Naive thymus-derived CD4-positive, alpha-beta T cell (primary cell): ENCODE measurements at regions of chr1 and their contacts with region 1.

Region 1: GRCh38 chr1:55204997-55205396 is 10.2 kb downstream of the USP24 start:
- DNase-seq: no peak
- ATAC-seq: no peak
- H3K4me3 ChIP-seq: no peak overlapping the region
- H3K4me3 Mint-ChIP-seq: peak overlapping the region in 5 of 10 donors; percentile 1 to 48 (median 8)
- H3K27ac ChIP-seq: no peak overlapping the region
- H3K27ac Mint-ChIP-seq: peak overlapping the region in 7 of 9 donors; percentile 5 to 90 (median 41)
- H3K4me1 ChIP-seq: peaks cover 29 to 38% of the 10 kb centered on the region in 2 donors
- H3K4me1 Mint-ChIP-seq: peaks cover 56 to 94% (median 82%) of the 10 kb centered on the region in 7 donors
- H3K27me3 ChIP-seq: no peaks in the 10 kb centered on the region
- H3K27me3 Mint-ChIP-seq: no peaks in the 10 kb centered on the region

Region 2: DNA sequence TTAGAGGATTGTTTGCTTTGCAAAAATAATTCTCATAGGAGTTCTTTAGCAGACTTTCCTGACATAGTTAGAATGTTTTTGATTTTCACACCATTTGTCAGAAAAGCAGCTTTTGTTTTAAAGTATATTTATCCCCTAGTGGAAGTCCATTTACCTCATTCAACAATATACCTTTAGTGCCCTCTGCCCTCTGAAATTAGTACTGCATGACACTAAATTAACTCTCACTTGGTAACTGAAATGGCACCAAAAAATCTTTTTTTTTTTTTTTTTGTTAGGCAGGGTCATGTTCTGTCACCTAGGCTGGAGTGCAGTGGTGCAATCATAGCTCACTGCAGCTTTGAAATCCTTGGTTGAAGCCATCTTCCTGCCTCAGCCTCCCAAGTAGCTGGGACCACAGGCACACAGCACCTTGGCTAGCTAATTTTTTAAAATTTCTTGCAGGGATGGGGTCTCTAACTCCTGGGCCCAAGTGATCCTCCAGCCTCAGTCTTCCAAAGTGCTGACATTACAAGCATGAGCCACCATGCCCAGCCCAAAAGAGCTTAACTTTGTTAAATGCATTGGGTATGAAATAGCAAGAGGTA is 1245.2 kb before region 1 on chr1:
- CTCF ChIA-PET with region 1: interaction called, 10 read pairs
- POLR2A ChIA-PET with region 1: no interaction called
- intact Hi-C with region 1: no loop called
- DNase-seq: peak in 7 of 9 donors; percentile 33 to 62 (median 46)
- ATAC-seq: peak; percentile 86
- H3K4me3 ChIP-seq: no peak overlapping the region
- H3K4me3 Mint-ChIP-seq: no peak overlapping the region
- H3K27ac ChIP-seq: no peak overlapping the region
- H3K27ac Mint-ChIP-seq: no peak overlapping the region
- H3K4me1 ChIP-seq: no peaks in the 10 kb centered on the region
- H3K4me1 Mint-ChIP-seq: peaks cover 4 to 14% (median 5%) of the 10 kb centered on the region in 7 donors
- H3K27me3 ChIP-seq: no peaks in the 10 kb centered on the region
- H3K27me3 Mint-ChIP-seq: no peaks in the 10 kb centered on the region

Region 3: GRCh38 chr1:55164906-55165305 is 40.1 kb before region 1 on chr1:
- CTCF ChIA-PET with region 1: no interaction called
- POLR2A ChIA-PET with region 1: no interaction called
- intact Hi-C with region 1: loop called (anchors 1 to 5 kb)
- DNase-seq: no peak
- ATAC-seq: no peak
- H3K4me3 ChIP-seq: no peak overlapping the region
- H3K4me3 Mint-ChIP-seq: no peak overlapping the region
- H3K27ac ChIP-seq: no peak overlapping the region
- H3K27ac Mint-ChIP-seq: peak overlapping the region in 4 of 9 donors; percentile 7 to 48 (median 20)
- H3K4me1 ChIP-seq: no peaks in the 10 kb centered on the region
- H3K4me1 Mint-ChIP-seq: peaks cover 0 to 20% (median 18%) of the 10 kb centered on the region in 7 donors
- H3K27me3 ChIP-seq: no peaks in the 10 kb centered on the region
- H3K27me3 Mint-ChIP-seq: no peaks in the 10 kb centered on the region

Region 4: GRCh38 chr1:55188909-55189308 is 16.1 kb before region 1 on chr1:
- CTCF ChIA-PET with region 1: no interaction called
- POLR2A ChIA-PET with region 1: no interaction called
- intact Hi-C with region 1: loop called in 1 of 2 experiments (anchors 2 kb)
- DNase-seq: no peak
- ATAC-seq: no peak
- H3K4me3 ChIP-seq: no peak overlapping the region
- H3K4me3 Mint-ChIP-seq: peak overlapping the region in 1 of 10 donors; percentile 41
- H3K27ac ChIP-seq: no peak overlapping the region
- H3K27ac Mint-ChIP-seq: peak overlapping the region in 1 of 9 donors; percentile 1
- H3K4me1 ChIP-seq: peaks cover 13% of the 10 kb centered on the region in 2 donors
- H3K4me1 Mint-ChIP-seq: peaks cover 19 to 81% (median 64%) of the 10 kb centered on the region in 7 donors
- H3K27me3 ChIP-seq: no peaks in the 10 kb centered on the region
- H3K27me3 Mint-ChIP-seq: no peaks in the 10 kb centered on the region